MCF 10A (cell line): ENCODE measurements at regions of chr14 and their contacts with region 1.

Region 1: DNA sequence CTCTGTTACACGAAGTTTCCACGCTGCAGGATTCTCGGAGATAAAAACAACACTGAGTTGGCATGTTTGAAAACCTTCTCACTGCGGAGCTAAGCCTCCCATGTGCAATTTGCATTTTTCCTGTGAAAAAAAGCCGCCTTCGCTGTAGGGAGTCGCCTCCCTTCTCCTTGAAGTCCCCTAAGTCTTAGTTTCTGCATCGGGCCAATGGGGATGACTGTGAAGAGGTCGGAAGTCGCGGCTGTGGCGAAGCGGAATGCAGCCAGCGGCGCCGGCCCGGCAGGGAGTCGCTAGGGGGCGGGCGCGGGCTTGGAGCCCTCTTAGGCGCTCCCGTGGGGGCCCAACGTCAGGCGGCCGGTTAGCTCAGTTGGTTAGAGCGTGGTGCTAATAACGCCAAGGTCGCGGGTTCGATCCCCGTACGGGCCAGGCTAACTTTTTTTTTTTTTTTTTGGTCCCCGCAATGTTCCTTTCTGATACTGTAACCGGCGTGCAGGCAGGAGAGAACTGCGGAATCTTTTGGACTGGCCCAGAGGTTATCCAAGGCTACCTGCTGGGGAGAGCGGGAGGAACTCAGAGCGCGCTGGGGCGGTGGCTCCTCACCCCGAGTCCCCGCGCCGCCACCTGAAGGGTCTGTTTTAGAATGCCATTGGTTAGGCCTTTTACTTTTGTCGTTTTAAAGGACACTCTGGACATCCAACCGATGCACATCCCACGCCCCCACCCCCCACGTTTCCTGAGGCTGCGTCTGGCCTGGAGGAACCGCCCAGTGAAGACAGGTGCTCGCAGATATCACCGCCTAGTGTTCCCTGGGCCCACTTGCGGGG is 2.6 kb upstream of the ZNF839 start:
- DNase-seq: peak; percentile 90
- H3K4me3 Mint-ChIP-seq: peak overlapping the region; percentile 93
- H3K27ac Mint-ChIP-seq: peak overlapping the region; percentile 69
- H3K4me1 Mint-ChIP-seq: peaks cover 16% of the 10 kb centered on the region
- H3K27me3 Mint-ChIP-seq: no peaks in the 10 kb centered on the region
- CTCF ChIP-seq: peak; percentile 91

Region 2: DNA sequence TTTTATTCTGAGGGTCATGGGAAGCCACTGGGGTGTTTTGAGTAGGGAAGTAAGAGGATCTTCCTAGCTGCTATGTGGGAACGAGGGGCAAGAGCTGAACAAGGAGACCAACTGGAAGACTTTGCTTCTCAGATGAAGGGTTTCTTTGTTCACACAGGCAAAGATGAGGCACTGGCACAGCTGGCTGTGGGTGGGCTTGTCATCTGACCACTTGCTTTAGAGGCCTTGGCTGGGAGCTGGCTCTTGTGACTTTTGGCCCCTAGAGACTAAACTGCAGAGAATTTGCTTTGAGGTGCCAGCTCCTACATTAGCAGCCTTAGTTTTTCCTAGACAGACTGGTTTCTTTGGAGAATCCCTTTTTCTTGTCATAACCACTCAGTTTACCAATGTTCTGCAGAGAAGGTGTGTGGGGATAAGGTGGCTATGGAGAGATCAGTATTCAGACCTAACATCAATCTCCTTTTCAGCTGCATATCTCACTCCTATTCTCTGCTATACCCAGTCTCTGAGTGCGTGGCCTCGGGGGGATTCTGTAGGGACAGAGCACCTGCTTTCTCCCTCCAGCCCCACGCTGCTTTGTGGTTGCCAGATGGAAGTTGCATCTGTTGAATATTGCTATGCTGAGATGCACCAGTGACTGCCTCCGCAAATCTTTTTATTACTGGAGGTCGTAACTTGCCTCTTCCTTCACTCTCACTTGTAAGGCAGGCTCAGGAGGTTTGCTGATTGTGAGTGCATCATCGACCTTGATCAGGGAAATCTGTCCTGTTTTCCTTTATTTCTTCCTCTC is 542.8 kb before region 1 on chr14:
- CTCF ChIA-PET with region 1: no interaction called
- POLR2A ChIA-PET with region 1: no interaction called
- intact Hi-C with region 1: loop called (anchors 10 kb)
- DNase-seq: no peak
- H3K4me3 Mint-ChIP-seq: no peak overlapping the region
- H3K27ac Mint-ChIP-seq: no peak overlapping the region
- H3K4me1 Mint-ChIP-seq: peaks cover 14% of the 10 kb centered on the region
- H3K27me3 Mint-ChIP-seq: no peaks in the 10 kb centered on the region
- CTCF ChIP-seq: no peak

Region 3: GRCh38 chr14:102086972-102087761 is 229.8 kb before region 1 on chr14 and contains the start of gene HSP90AA1:
- CTCF ChIA-PET with region 1: interaction called, 3 read pairs
- POLR2A ChIA-PET with region 1: interaction called, 4 read pairs
- intact Hi-C with region 1: loop called (anchors 2 kb)
- DNase-seq: peak; percentile 90
- H3K4me3 Mint-ChIP-seq: peak within 1 kb of the TSS; percentile 63
- H3K27ac Mint-ChIP-seq: peak within 1 kb of the TSS; percentile 92
- H3K4me1 Mint-ChIP-seq: peaks cover 31% of the 10 kb centered on the region
- H3K27me3 Mint-ChIP-seq: no peaks in the 10 kb centered on the region
- CTCF ChIP-seq: no peak
- total RNA-seq, gene HSP90AA1: 277 and 296 TPM in 2 replicates

Region 4: DNA sequence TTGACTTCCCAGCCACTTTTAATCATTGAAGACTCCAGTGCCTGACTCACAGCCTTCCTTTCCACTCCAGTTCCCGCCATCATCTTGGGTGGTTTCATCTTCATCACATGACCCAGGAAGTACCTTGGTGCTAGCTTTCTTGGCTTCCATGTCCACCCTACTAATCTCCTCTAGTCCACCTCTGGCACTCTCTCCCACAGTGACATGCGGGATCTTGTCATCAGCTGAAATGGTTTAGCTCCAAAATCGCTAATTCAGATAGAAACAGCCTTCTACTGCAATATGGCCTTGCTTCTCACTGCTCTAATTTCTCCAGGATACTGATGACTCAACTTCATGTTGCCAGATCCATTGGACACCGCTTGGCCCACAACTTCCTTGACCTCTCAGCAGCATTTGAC is 152.7 kb before region 1 on chr14:
- CTCF ChIA-PET with region 1: no interaction called
- POLR2A ChIA-PET with region 1: no interaction called
- intact Hi-C with region 1: no loop called
- DNase-seq: peak; percentile 35
- H3K4me3 Mint-ChIP-seq: no peak overlapping the region
- H3K27ac Mint-ChIP-seq: no peak overlapping the region
- H3K4me1 Mint-ChIP-seq: peaks cover 22% of the 10 kb centered on the region
- H3K27me3 Mint-ChIP-seq: no peaks in the 10 kb centered on the region
- CTCF ChIP-seq: no peak

Region 5: DNA sequence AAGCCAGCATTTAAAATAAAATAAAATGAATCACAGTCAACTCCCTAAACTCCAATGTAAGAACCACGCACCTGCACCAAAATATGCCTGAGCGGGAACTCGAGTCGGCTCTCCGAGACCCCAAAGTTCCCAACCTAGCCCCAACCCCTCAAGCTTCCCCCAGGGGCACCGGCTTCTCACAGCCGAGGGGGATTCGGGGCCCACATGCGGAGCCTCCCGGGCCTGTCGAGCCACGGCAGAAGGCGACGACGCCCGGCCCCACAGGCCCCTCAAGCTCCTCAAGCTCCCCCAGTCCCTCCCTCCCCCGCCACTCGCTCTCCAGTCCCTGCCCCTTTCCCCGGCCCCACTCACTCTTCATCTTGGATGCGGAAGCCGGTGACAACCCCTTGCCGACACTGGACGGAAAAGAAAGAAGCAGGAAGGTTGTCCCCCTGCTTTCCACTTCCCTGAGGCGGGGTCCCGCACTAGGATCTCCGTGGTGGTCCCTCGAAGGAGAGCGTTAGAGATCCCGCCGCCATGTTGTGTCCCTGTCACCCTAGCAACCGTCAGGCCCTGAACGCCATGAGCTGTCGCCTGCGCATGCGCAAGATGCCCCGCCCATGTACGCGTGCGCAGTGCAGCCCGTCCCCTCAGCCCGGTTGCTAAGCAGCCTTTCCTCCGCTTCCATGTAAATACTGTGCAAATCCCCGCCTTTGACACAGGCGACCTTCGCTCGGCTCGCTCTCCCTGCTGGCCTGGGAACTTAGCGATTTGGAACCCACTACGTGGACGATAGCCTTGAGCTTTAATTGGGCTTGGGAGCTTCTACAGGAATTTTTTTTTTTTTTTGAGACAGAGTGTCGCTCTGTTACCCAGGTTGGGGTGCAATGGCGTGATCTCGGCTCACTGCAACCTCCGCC is 12.1 kb before region 1 on chr14 and contains the start of gene MOK:
- CTCF ChIA-PET with region 1: interaction called, 7 read pairs
- POLR2A ChIA-PET with region 1: interaction called, 29 read pairs
- intact Hi-C with region 1: no loop called
- DNase-seq: peak; percentile 96
- H3K4me3 Mint-ChIP-seq: peak within 1 kb of the TSS; percentile 87
- H3K27ac Mint-ChIP-seq: peak within 1 kb of the TSS; percentile 99
- H3K4me1 Mint-ChIP-seq: peaks cover 7% of the 10 kb centered on the region
- H3K27me3 Mint-ChIP-seq: no peaks in the 10 kb centered on the region
- CTCF ChIP-seq: no peak
- total RNA-seq, gene MOK: 61.7 and 98.9 TPM in 2 replicates

Region 6: DNA sequence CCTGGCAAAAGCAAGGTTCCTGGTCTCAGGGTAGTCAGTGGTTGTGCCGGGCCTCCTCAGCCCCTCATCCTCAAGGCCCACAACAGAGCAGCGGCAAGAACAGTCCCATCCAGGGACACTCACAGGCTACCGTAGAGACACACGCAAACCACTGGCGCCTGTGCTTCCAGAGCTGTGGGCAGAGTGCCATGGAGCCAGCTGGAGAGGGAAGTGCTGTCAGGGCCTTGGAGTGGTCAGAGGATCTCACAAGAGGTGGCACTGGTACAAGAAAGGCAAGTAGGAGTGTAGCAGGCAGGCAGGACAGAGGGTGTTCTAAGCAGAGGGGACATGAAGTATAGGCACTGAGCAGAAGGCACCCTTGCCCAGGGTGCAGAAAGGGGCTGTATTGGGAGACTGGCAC is 158.0 kb after region 1 on chr14:
- CTCF ChIA-PET with region 1: no interaction called
- POLR2A ChIA-PET with region 1: no interaction called
- intact Hi-C with region 1: no loop called
- DNase-seq: no peak
- H3K4me3 Mint-ChIP-seq: no peak overlapping the region
- H3K27ac Mint-ChIP-seq: no peak overlapping the region
- H3K4me1 Mint-ChIP-seq: peaks cover 8% of the 10 kb centered on the region
- H3K27me3 Mint-ChIP-seq: no peaks in the 10 kb centered on the region
- CTCF ChIP-seq: no peak

Region 7: GRCh38 chr14:102509744-102510615 is 193.0 kb after region 1 on chr14 and contains the start of gene ANKRD9:
- CTCF ChIA-PET with region 1: interaction called, 3 read pairs
- POLR2A ChIA-PET with region 1: no interaction called
- intact Hi-C with region 1: loop called (anchors 2 kb)
- DNase-seq: peak; percentile 94
- H3K4me3 Mint-ChIP-seq: peak within 1 kb of the TSS; percentile 72
- H3K27ac Mint-ChIP-seq: no peak within 1 kb of the TSS
- H3K4me1 Mint-ChIP-seq: no peaks in the 10 kb centered on the region
- H3K27me3 Mint-ChIP-seq: no peaks in the 10 kb centered on the region
- CTCF ChIP-seq: no peak
- total RNA-seq, gene ANKRD9: 8.4 and 10.2 TPM in 2 replicates

Region 8: DNA sequence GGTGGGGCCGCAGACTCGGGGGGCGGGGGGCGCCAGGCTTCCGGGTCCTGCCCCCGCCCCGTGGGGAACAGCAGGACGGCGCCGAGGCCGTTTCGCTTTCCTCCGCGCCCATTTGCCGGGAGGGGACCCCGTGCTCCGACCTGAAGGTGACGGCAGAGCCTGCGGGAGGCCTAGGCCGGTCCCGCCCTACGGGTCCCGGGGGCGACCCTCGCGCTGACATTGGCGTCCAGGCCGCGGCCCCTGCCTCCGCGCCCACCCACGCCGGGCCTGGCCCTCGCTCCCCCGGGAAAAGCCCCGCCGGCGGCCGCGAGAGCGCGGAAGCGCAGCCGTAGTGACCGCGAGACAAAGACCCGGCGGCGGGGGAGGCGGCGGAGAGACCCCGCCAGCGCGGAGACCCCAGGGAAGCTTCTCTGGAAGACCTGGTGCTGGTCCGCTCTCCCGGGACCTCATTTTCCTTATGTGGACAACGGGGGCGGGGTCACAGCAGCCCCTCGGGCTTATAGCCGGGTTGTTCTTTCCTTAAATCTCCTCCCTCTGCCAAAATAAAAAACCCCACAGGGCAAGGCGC is 238.4 kb after region 1 on chr14:
- CTCF ChIA-PET with region 1: no interaction called
- POLR2A ChIA-PET with region 1: no interaction called
- intact Hi-C with region 1: no loop called
- DNase-seq: no peak
- H3K4me3 Mint-ChIP-seq: no peak overlapping the region
- H3K27ac Mint-ChIP-seq: no peak overlapping the region
- H3K4me1 Mint-ChIP-seq: peaks cover 9% of the 10 kb centered on the region
- H3K27me3 Mint-ChIP-seq: no peaks in the 10 kb centered on the region
- CTCF ChIP-seq: no peak

Region 9: DNA sequence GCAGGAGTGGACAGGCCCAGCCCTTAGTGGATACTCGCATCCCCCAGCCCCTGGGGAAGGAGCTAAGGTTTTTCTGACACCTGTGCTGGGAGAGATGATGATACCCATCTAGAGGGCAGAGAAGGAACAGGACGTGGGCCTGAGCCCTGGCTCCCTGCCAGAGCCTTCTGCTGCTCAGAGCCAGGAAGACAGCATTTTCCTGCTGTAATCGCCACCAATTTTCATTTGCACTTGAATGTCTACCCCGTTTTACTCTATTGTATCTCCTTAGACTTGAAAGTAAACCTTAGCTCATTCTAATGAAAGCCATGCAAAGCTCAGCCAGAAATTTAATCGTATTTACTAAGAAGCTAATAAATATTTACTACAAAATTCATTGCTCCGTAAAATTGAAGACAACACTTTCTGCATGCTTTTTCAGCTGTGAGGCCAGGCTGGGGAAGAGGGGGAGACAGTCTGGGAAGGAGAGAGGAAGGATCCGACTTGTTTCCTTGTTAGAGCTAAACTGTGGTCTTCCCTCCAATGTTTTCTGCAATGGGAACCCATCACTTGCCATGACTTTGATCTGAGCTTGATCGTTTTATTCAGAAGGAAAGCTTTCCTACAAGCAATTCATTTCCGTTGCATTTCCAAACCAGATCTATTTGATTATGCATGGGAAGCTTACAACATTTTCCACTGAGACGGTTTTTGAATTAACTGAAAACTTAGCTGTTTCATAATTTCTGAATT is 442.7 kb after region 1 on chr14:
- CTCF ChIA-PET with region 1: no interaction called
- POLR2A ChIA-PET with region 1: no interaction called
- intact Hi-C with region 1: no loop called
- DNase-seq: no peak
- H3K4me3 Mint-ChIP-seq: no peak overlapping the region
- H3K27ac Mint-ChIP-seq: no peak overlapping the region
- H3K4me1 Mint-ChIP-seq: no peaks in the 10 kb centered on the region
- H3K27me3 Mint-ChIP-seq: no peaks in the 10 kb centered on the region
- CTCF ChIP-seq: no peak